Heart left ventricle (tissue), 16 donors: ENCODE measurements at regions of chr18 and their contacts with region 1.

Region 1: DNA sequence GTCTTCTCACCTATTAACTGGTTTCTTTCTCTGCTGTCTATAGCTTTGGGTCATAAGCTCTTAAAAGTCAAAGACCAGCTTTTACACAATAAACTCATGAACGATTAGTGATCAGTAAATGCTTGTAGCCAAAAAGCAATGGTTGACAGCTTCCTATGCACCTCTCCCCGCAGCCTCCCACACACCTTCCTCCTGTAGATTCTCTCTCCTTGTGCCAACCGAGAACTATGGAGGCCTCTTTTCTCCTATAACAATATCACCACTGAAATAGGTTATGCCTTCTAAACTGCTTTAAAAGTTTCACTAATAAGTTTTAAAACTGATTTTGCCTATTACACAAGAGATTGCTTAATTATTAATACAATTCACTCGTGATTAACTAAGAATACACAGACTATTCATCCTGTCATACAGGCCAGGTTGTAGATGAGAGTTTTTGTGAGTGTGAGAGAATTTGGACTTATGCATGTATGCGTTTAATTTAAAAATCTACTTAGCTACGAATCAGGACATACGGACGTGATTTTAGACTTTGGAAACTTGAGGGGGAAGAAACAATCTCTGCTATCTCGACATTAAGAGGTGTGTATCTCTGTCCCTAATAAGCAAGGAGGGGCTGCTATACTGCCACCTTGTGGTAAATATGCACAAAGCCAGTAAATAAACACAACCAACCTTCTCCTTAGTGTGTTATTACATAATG is 229.1 kb upstream of the RBBP8 start:
- DNase-seq: peak in 1 of 5 donors; percentile 16
- ATAC-seq: peak; percentile 68 to 82 (median 72)
- H3K4me3 ChIP-seq: no peak overlapping the region
- H3K27ac ChIP-seq: no peak overlapping the region
- H3K4me1 ChIP-seq: peaks cover 0 to 12% (median 0%) of the 10 kb centered on the region in 12 donors
- H3K27me3 ChIP-seq: no peaks in the 10 kb centered on the region
- CTCF ChIP-seq: peak; percentile 72 to 95 (median 82)
- POLR2A ChIP-seq: no peak

Region 2: GRCh38 chr18:21914739-21915319 is 789.2 kb before region 1 on chr18:
- intact Hi-C with region 1: loop called in 4 of 10 experiments (anchors 10 kb)
- DNase-seq: peak in 2 of 5 donors; percentile 18 to 22
- ATAC-seq: peak in 3 of 4 donors; percentile 70 to 83 (median 76)
- H3K4me3 ChIP-seq: no peak overlapping the region
- H3K27ac ChIP-seq: no peak overlapping the region
- H3K4me1 ChIP-seq: no peaks in the 10 kb centered on the region
- H3K27me3 ChIP-seq: no peaks in the 10 kb centered on the region
- CTCF ChIP-seq: peak in 11 of 12 donors; percentile 25 to 63 (median 44)
- POLR2A ChIP-seq: no peak

Region 3: DNA sequence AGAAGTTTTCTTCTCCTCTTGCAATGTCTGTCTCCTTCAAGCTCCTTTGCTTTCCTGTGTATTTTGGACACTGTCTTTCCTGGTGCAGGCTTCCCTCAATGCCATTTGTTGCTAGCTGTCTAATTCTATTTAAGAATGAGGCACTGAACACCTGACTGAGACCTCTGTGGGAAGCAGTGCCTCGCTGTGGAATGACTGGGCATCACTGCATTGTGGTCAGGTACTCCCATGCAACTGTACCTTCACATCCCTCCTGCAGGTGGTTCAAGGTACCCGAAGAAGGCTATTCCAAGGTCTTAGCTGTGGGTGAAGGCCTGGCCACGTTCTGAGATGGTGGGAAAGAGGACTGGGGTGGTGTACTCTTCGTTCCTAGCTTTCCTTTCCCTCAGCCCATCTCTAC is 133.5 kb before region 1 on chr18:
- intact Hi-C with region 1: loop called in 3 of 10 experiments (anchors 10 kb)
- DNase-seq: no peak
- ATAC-seq: no peak
- H3K4me3 ChIP-seq: no peak overlapping the region
- H3K27ac ChIP-seq: no peak overlapping the region
- H3K4me1 ChIP-seq: peaks cover 0 to 4% (median 0%) of the 10 kb centered on the region in 12 donors
- H3K27me3 ChIP-seq: no peaks in the 10 kb centered on the region
- CTCF ChIP-seq: no peak
- POLR2A ChIP-seq: no peak

Region 4: GRCh38 chr18:22609642-22610041 is 94.4 kb before region 1 on chr18:
- intact Hi-C with region 1: loop called in 6 of 10 experiments (anchors 5 to 10 kb)
- DNase-seq: peak; percentile 67 to 79 (median 76)
- ATAC-seq: peak; percentile 25 to 60 (median 49)
- H3K4me3 ChIP-seq: no peak overlapping the region
- H3K27ac ChIP-seq: peak overlapping the region; percentile 12 to 74 (median 50)
- H3K4me1 ChIP-seq: peaks cover 0 to 58% (median 30%) of the 10 kb centered on the region in 12 donors
- H3K27me3 ChIP-seq: no peaks in the 10 kb centered on the region
- CTCF ChIP-seq: no peak
- POLR2A ChIP-seq: no peak

Region 5: GRCh38 chr18:22946846-22947245 is 242.8 kb after region 1 on chr18:
- intact Hi-C with region 1: no loop called
- DNase-seq: no peak
- ATAC-seq: no peak
- H3K4me3 ChIP-seq: no peak overlapping the region
- H3K27ac ChIP-seq: no peak overlapping the region
- H3K4me1 ChIP-seq: peaks cover 0 to 5% (median 0%) of the 10 kb centered on the region in 12 donors
- H3K27me3 ChIP-seq: no peaks in the 10 kb centered on the region
- CTCF ChIP-seq: no peak
- POLR2A ChIP-seq: no peak